B cell (primary cell): ENCODE measurements at regions of chr3 and their contacts with region 1.

Region 1: GRCh38 chr3:114290911-114291901 is 2.6 kb upstream of the TIGIT start:
- DNase-seq: peak; percentile 94
- ATAC-seq: peak; percentile 86
- H3K4me3 ChIP-seq: peak overlapping the region in 2 of 5 experiments; percentile 33 to 40
- H3K4me3 Mint-ChIP-seq: peak overlapping the region; percentile 83
- H3K27ac ChIP-seq: peak overlapping the region; percentile 93
- H3K27ac Mint-ChIP-seq: peak overlapping the region; percentile 97
- H3K4me1 ChIP-seq: peaks cover 13 to 18% of the 10 kb centered on the region in 2 donors
- H3K4me1 Mint-ChIP-seq: peaks cover 30% of the 10 kb centered on the region
- H3K27me3 ChIP-seq: no peaks in the 10 kb centered on the region
- H3K27me3 Mint-ChIP-seq: no peaks in the 10 kb centered on the region
- CTCF ChIP-seq: peak; percentile 92

Region 2: DNA sequence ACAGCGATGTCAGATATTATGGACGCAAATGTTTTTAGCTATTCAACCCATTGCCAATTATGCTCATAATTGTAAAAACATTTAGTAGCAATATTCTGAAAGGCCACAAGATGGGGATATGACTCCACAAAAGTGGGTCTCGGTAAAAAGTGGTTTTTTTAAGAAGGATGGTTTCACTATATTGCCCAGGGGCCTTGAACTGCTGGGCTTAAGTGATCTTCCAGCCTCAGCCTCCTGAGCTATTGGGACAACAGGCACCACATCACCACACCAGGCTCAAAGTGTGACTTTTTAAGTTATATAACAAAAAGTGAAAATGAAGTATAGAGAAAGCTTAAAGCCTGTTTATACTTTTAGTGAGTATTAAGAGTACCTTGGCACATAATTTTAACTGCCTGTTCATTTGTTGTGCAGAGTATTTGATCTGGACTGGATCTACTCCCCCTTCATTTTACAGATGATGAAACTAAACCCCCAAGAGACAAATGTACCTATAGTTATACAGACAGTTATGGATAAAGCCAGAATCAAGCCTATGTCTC is 554.6 kb before region 1 on chr3:
- CTCF ChIA-PET with region 1: no interaction called
- POLR2A ChIA-PET with region 1: no interaction called
- intact Hi-C with region 1: loop called (anchors 10 kb)
- DNase-seq: peak; percentile 80
- ATAC-seq: peak; percentile 85
- H3K4me3 ChIP-seq: no peak overlapping the region
- H3K4me3 Mint-ChIP-seq: no peak overlapping the region
- H3K27ac ChIP-seq: peak overlapping the region in 1 of 2 donors; percentile 32
- H3K27ac Mint-ChIP-seq: peak overlapping the region; percentile 68
- H3K4me1 ChIP-seq: peaks cover 7 to 8% of the 10 kb centered on the region in 2 donors
- H3K4me1 Mint-ChIP-seq: peaks cover 44% of the 10 kb centered on the region
- H3K27me3 ChIP-seq: no peaks in the 10 kb centered on the region
- H3K27me3 Mint-ChIP-seq: no peaks in the 10 kb centered on the region
- CTCF ChIP-seq: peak; percentile 80

Region 3: DNA sequence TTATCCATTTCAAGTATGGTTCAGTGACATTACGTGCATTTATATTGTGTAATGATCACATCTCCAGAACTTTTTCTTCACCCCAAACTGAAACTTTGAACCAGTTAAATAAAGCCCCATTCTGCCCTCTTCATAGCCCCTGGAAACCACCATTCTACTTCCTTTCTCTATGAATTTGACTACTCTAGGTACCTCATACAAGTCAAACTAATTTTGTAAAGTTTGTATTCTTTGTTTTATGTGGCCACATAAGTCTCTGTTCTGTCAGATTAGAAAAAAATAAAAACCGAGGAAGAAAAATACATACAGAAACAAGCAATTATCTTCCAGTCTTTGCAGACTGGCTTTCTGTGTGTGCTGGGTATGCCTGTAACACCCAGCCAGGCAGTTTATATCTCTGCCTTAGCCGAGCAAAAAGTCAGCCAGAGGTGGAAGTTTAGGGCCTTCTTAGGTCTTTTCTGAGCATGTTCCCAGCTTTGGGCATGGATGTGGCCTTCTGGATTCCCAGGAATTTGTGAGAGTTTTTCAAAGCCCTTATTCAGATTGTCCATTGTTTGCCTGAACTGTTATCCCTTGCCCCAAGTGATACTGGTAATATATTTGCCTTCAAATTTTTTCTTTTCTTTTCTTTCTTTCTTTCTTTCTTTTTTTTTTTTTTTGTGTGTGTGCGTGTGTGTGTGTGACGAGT is 458.6 kb before region 1 on chr3:
- CTCF ChIA-PET with region 1: no interaction called
- POLR2A ChIA-PET with region 1: no interaction called
- intact Hi-C with region 1: loop called (anchors 5 kb)
- DNase-seq: peak; percentile 23
- ATAC-seq: no peak
- H3K4me3 ChIP-seq: peak overlapping the region in 1 of 5 experiments; percentile 3
- H3K4me3 Mint-ChIP-seq: peak overlapping the region; percentile 20
- H3K27ac ChIP-seq: peak overlapping the region; percentile 43 to 59
- H3K27ac Mint-ChIP-seq: peak overlapping the region; percentile 56
- H3K4me1 ChIP-seq: peaks cover 49 to 50% of the 10 kb centered on the region in 2 donors
- H3K4me1 Mint-ChIP-seq: peaks cover 61% of the 10 kb centered on the region
- H3K27me3 ChIP-seq: no peaks in the 10 kb centered on the region
- H3K27me3 Mint-ChIP-seq: no peaks in the 10 kb centered on the region
- CTCF ChIP-seq: no peak

Region 4: GRCh38 chr3:114223143-114223542 is 68.1 kb before region 1 on chr3:
- CTCF ChIA-PET with region 1: interaction called, 36 read pairs
- POLR2A ChIA-PET with region 1: interaction called, 10 read pairs
- intact Hi-C with region 1: no loop called
- DNase-seq: peak; percentile 63
- ATAC-seq: peak; percentile 58
- H3K4me3 ChIP-seq: no peak overlapping the region
- H3K4me3 Mint-ChIP-seq: no peak overlapping the region
- H3K27ac ChIP-seq: peak overlapping the region; percentile 73 to 80
- H3K27ac Mint-ChIP-seq: peak overlapping the region; percentile 85
- H3K4me1 ChIP-seq: peaks cover 59 to 76% of the 10 kb centered on the region in 2 donors
- H3K4me1 Mint-ChIP-seq: peaks cover 81% of the 10 kb centered on the region
- H3K27me3 ChIP-seq: no peaks in the 10 kb centered on the region
- H3K27me3 Mint-ChIP-seq: no peaks in the 10 kb centered on the region
- CTCF ChIP-seq: no peak

Region 5: DNA sequence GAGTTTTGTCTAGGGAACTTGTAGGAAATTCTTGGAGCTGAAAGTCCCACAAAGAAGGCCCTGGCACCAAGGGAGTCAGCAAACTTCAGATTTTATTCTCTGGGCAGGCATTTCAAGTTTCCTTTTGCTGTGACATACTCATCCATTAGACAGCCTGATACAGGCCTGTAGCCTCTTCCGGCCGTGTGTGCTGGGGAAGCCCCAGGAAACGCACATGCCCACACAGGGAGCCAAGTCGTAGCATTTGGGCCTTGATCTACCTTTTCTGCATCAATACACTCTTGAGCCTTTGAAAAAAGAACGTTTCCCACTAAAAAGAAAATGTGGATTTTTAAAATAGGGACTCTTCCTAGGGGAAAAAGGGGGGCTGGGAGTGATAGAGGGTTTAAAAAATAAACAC is 17.6 kb after region 1 on chr3:
- CTCF ChIA-PET with region 1: interaction called, 31 read pairs
- POLR2A ChIA-PET with region 1: interaction called, 5 read pairs
- intact Hi-C with region 1: no loop called
- DNase-seq: peak; percentile 69
- ATAC-seq: peak; percentile 84
- H3K4me3 ChIP-seq: no peak overlapping the region
- H3K4me3 Mint-ChIP-seq: peak overlapping the region; percentile 77
- H3K27ac ChIP-seq: peak overlapping the region; percentile 74 to 82
- H3K27ac Mint-ChIP-seq: peak overlapping the region; percentile 94
- H3K4me1 ChIP-seq: peaks cover 22 to 27% of the 10 kb centered on the region in 2 donors
- H3K4me1 Mint-ChIP-seq: peaks cover 34% of the 10 kb centered on the region
- H3K27me3 ChIP-seq: no peaks in the 10 kb centered on the region
- H3K27me3 Mint-ChIP-seq: no peaks in the 10 kb centered on the region
- CTCF ChIP-seq: no peak

Region 6: GRCh38 chr3:114336122-114336697 is 45.0 kb after region 1 on chr3:
- CTCF ChIA-PET with region 1: interaction called, 23 read pairs
- POLR2A ChIA-PET with region 1: no interaction called
- intact Hi-C with region 1: loop called (anchors 1 kb)
- DNase-seq: peak; percentile 25
- ATAC-seq: no peak
- H3K4me3 ChIP-seq: no peak overlapping the region
- H3K4me3 Mint-ChIP-seq: no peak overlapping the region
- H3K27ac ChIP-seq: no peak overlapping the region
- H3K27ac Mint-ChIP-seq: no peak overlapping the region
- H3K4me1 ChIP-seq: peaks cover 14% of the 10 kb centered on the region in 2 donors
- H3K4me1 Mint-ChIP-seq: peaks cover 31% of the 10 kb centered on the region
- H3K27me3 ChIP-seq: no peaks in the 10 kb centered on the region
- H3K27me3 Mint-ChIP-seq: no peaks in the 10 kb centered on the region
- CTCF ChIP-seq: peak; percentile 56